Breast epithelium (tissue), 4 donors: ENCODE measurements at regions of chr3 and their contacts with region 1.

Region 1: DNA sequence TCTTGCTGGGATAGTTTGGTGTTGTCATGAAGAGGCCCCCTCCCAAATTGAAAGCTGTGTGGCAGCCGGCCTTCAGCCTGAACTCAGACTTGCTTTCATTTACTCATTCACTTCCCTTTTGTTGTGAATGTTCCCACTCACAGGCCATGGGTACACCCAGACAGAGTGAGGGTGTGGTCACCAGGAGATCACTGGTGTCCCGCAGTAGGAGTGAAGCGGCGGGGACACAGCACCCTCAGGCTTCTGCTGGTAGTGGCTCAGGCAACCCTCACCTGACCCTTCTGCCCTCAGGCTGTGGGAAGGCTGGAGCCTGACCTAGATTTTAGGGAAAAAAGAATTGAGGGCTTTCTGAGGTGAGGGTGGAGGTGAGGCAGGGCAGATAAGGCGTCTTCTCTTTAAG is 244.4 kb downstream of the SOX2 start:
- DNase-seq: no peak
- H3K4me3 ChIP-seq: no peak overlapping the region
- H3K27ac ChIP-seq: no peak overlapping the region
- H3K4me1 ChIP-seq: no peaks in the 10 kb centered on the region
- H3K27me3 ChIP-seq: no peaks in the 10 kb centered on the region
- CTCF ChIP-seq: no peak
- POLR2A ChIP-seq: no peak

Region 2: GRCh38 chr3:180246688-180247195 is 1709.4 kb before region 1 on chr3:
- intact Hi-C with region 1: no loop called
- DNase-seq: no peak
- H3K4me3 ChIP-seq: no peak overlapping the region
- H3K27ac ChIP-seq: no peak overlapping the region
- H3K4me1 ChIP-seq: no peaks in the 10 kb centered on the region
- H3K27me3 ChIP-seq: no peaks in the 10 kb centered on the region
- CTCF ChIP-seq: no peak
- POLR2A ChIP-seq: no peak

Region 3: GRCh38 chr3:181932039-181932438 is 24.1 kb before region 1 on chr3:
- intact Hi-C with region 1: no loop called
- DNase-seq: no peak
- H3K4me3 ChIP-seq: no peak overlapping the region
- H3K27ac ChIP-seq: no peak overlapping the region
- H3K4me1 ChIP-seq: no peaks in the 10 kb centered on the region
- H3K27me3 ChIP-seq: no peaks in the 10 kb centered on the region
- CTCF ChIP-seq: no peak
- POLR2A ChIP-seq: no peak

Region 4: DNA sequence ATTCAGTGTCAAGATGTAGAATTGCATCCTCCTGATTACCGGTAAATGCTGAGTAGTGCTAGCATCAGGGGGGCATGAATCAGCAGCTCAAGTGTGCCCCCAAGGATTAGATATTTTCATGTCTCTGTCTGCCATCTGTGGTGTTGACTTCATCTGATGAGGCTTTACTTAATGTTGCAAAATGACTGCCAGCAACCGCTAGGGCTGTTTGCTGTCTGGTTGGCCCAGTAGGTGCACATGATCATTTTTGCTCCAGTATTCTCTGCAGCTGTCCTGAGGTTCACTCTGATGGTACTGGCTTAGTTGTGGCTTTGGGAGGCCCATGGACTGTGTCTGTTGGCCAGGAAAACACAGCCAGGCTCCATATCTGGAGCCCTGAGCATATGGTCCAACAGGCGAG is 72.0 kb after region 1 on chr3:
- intact Hi-C with region 1: loop called (anchors 2 kb)
- DNase-seq: no peak
- H3K4me3 ChIP-seq: no peak overlapping the region
- H3K27ac ChIP-seq: no peak overlapping the region
- H3K4me1 ChIP-seq: no peaks in the 10 kb centered on the region
- H3K27me3 ChIP-seq: no peaks in the 10 kb centered on the region
- CTCF ChIP-seq: no peak
- POLR2A ChIP-seq: no peak

Region 5: DNA sequence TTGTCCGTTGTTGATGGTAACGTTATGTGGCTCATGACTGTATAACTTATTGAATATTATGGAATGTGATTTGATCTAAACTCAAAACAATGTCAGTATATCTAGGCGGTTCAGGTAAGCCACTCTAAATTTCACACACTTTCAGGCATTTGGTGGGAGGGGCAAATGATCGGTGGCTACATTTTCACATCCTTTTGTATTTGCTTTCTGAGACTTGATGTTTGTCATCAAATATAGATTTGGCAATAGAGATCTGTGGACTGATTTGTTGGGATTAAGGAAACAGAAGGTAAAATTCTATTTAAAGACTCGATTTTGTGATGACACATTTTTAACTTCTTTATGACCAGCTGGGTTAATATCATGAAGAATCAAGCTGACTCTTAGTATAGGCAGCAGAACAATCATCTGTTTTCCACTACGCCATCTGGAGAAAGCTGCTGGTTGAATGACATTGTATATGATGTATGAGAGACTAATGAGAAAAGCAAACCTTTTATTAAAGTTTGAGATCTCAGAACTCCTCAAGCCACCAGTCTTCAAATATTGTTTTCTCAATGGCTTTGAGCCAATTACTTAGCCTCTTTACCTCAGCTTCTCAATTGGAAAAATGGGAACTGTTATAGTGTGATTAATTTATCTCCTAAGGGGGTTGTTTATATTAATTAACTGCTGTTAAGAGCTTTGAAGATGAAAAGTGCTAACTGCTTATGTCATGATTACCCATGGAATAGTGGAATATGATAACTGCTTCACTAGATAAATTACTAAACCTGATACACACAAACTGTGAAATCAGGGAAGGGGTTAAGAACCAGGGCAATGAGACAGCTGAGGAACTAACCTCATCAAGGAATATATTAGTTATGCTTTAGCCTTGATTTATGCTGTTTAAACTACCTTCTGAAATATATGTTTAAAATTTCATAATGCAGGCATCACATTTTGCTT is 85.5 kb after region 1 on chr3:
- intact Hi-C with region 1: no loop called
- DNase-seq: no peak
- H3K4me3 ChIP-seq: no peak overlapping the region
- H3K27ac ChIP-seq: no peak overlapping the region
- H3K4me1 ChIP-seq: no peaks in the 10 kb centered on the region
- H3K27me3 ChIP-seq: no peaks in the 10 kb centered on the region
- CTCF ChIP-seq: no peak
- POLR2A ChIP-seq: no peak